ENCODE measurements at regions of chr9 and their contacts with region 1.

Region 1: GRCh38 chr9:127104465-127105311 is 17.7 kb downstream of the ANGPTL2 start:
- DNase-seq: peak; percentile 52
- H3K4me3 ChIP-seq: no peak overlapping the region
- H3K27ac ChIP-seq: no peak overlapping the region
- H3K4me1 ChIP-seq: peaks cover 7% of the 10 kb centered on the region
- H3K27me3 ChIP-seq: peaks cover 7% of the 10 kb centered on the region
- CTCF ChIP-seq: no peak

Region 2: DNA sequence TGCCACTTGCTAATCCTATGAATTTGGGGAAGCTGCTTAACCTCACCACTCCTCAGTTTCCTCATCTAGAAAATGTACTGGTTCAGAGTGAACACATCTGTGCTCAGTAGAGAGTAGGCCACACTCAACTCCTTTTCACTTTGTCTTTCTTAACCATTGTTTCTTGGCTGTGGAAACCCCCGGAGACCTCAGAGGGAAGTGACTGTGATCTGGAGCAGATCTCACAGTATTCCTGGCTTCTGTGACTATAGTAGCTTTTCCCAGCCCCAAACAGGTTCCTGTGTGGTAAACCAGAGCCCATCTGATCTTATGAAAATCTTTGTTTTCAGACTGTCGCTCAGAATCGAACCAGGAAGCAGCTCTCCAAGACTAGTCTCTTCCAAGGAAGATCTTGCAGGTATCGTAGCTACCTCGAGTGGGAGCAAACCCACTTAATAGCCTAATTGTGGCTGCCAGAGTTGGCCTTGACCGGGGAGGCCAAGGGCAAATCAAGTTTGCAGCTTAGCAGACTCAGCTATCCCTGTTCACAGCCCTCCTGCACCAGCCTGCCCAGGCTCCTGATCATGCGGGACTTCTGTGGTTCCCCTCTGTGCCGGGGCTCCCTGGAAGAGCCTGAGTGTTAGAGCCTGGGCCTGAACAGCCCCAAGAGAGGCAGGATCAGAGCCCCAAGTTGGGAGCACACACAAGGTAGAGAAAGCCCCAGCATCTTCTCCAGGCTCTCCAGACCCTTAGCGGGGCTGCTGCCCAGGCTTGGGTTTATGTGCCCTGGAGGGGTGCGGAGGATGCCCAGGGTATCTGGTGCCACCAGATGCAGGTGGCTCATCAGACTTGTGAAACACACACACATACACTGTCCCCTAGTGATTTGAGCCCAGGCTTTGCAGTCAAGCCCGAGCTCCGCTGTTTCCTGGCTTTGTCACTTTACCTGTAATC is 70.0 kb after region 1 on chr9:
- CTCF ChIA-PET with region 1: no interaction called
- dilution Hi-C with region 1: loop called (anchors 5 kb)
- in situ Hi-C with region 1: no loop called
- intact Hi-C with region 1: no loop called
- DNase-seq: no peak
- H3K4me3 ChIP-seq: no peak overlapping the region
- H3K27ac ChIP-seq: no peak overlapping the region
- H3K4me1 ChIP-seq: no peaks in the 10 kb centered on the region
- H3K27me3 ChIP-seq: peaks cover 5% of the 10 kb centered on the region
- CTCF ChIP-seq: no peak

Region 3: GRCh38 chr9:127214421-127215267 is 110.0 kb after region 1 on chr9:
- CTCF ChIA-PET with region 1: no interaction called
- dilution Hi-C with region 1: no loop called
- in situ Hi-C with region 1: no loop called
- intact Hi-C with region 1: no loop called
- DNase-seq: peak; percentile 52
- H3K4me3 ChIP-seq: no peak overlapping the region
- H3K27ac ChIP-seq: no peak overlapping the region
- H3K4me1 ChIP-seq: no peaks in the 10 kb centered on the region
- H3K27me3 ChIP-seq: no peaks in the 10 kb centered on the region
- CTCF ChIP-seq: peak; percentile 85 to 92